GM12878 (cell line): ENCODE measurements at regions of chrX and their contacts with region 1.

Region 1: GRCh38 chrX:42289492-42290385 is 366.4 kb upstream of the CASK start:
- DNase-seq: no peak
- ATAC-seq: no peak
- H3K4me3 ChIP-seq: no peak overlapping the region
- H3K27ac ChIP-seq: no peak overlapping the region
- H3K4me1 ChIP-seq: no peaks in the 10 kb centered on the region
- H3K27me3 ChIP-seq: no peaks in the 10 kb centered on the region
- CTCF ChIP-seq: no peak
- EP300 ChIP-seq: no peak
- POLR2A ChIP-seq: no peak
- RAD21 ChIP-seq: no peak

Region 2: DNA sequence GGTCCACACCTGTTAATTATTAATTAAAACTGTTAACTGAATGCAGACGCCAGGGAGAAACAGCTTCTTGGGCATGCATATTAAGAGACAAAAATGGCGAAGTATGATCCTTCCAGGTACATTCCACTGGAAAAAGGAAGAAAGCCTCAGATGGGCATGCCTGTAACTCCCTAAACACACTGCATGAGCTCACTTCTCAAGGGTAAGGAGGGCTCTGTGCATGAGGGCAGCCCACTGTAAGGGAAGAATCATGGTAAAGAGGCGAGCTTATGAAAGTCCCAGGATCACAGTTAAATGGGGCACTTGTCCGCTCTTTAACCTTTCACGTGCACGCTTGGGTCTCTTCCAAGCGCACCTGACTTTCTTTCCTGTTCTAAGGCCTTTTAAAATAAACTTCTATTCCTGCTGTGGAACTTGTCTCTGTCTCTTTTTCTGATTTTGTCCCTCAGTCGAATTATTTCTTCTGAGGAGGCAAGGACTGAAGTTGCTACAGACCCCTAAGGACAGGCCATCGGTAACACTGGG is 166.5 kb after region 1 on chrX:
- CTCF ChIA-PET with region 1: no interaction called
- POLR2A ChIA-PET with region 1: no interaction called
- RAD21 ChIA-PET with region 1: no interaction called
- SMC1A ChIA-PET with region 1: no interaction called
- in situ Hi-C with region 1: no loop called
- intact Hi-C with region 1: loop called (anchors 10 kb)
- DNase-seq: no peak
- ATAC-seq: no peak
- H3K4me3 ChIP-seq: no peak overlapping the region
- H3K27ac ChIP-seq: no peak overlapping the region
- H3K4me1 ChIP-seq: no peaks in the 10 kb centered on the region
- H3K27me3 ChIP-seq: no peaks in the 10 kb centered on the region
- CTCF ChIP-seq: no peak
- EP300 ChIP-seq: no peak
- POLR2A ChIP-seq: no peak
- RAD21 ChIP-seq: no peak

Region 3: DNA sequence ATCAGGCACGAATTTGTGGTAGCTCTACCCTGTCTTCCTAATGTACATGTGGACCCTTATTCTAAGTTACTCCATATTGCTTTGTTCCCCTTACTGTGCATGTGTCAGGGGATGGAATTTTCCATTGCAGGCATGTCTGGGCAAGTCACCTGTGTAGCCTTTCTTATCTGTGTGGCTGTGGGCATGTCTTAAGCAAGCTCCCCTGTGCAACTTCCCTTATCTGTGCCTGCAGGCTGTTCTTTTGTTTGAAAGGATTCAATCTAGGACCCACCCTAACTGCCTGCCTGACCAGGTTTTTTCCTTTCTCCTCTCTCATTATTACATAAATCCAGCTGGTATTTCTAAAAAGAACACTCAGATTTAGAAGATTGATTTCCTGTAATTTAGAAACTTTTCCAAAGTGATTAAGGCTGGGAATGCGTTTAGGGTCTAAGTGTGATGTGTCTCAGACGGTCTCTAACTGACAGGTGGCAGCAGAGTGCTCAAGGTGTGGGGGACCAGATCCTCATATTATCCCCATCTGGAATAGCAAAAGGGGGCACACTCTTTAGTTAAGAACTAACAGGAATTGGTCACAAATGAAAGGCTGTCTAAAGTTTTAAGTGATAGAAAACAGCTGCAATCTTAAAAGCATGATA is 687.1 kb after region 1 on chrX:
- CTCF ChIA-PET with region 1: no interaction called
- POLR2A ChIA-PET with region 1: no interaction called
- RAD21 ChIA-PET with region 1: no interaction called
- SMC1A ChIA-PET with region 1: no interaction called
- in situ Hi-C with region 1: no loop called
- intact Hi-C with region 1: no loop called
- DNase-seq: no peak
- ATAC-seq: peak; percentile 53
- H3K4me3 ChIP-seq: no peak overlapping the region
- H3K27ac ChIP-seq: peak overlapping the region; percentile 42
- H3K4me1 ChIP-seq: peaks cover 8% of the 10 kb centered on the region; the same call in 1 of the 2 replicates
- H3K27me3 ChIP-seq: no peaks in the 10 kb centered on the region
- CTCF ChIP-seq: peak in 1 of 3 experiments; percentile 13; a peak in 1 of 6 replicates
- EP300 ChIP-seq: no peak
- POLR2A ChIP-seq: no peak
- RAD21 ChIP-seq: 0 out of 2 replicates have a peak, but pooled peaks have one; percentile 19